Spleen (tissue), 13 donors: ENCODE measurements at regions of chr1 and their contacts with region 1.

Region 1: DNA sequence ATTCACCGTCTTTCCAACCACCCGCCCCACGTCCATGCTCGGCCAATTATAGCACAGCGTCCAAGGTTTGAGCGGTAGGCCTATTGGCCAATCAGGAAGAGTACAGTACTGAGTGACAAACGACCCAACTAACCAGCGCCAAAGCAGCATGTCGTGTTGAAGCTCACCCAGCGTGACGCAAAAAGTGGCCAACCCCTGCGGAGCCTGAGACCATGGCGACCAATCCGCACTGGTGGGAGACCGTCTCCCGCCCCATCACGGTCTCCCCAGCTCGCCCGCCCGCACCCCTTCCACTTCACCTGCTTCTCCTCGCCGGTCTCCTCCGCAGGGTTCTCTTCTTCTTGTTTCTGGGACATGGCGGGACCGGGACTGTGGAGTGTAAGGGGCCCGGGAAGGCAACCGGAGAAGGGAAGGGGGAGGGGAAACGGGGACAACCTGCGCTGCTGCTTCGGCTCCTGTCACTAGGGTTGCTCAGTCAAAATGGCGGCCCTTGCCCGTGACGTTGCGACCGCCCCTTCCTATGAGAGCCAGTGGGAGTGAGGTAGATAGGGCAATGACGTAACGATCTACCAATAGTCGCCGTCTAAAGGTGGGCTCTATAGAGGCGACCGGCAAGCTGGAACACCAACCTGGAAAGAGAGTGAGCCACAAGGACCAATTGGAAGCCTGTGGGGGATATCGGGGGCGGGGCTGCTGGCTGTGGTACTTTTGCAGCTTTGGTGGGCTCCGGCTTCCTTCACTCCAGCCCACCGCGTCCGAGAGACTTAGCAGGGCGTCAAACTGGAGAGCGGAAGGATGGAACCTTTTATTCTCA is at the start of gene ENSA:
- DNase-seq: peak; percentile 98
- H3K4me3 ChIP-seq: peak within 1 kb of the TSS; percentile 54 to 68 (median 60)
- H3K27ac ChIP-seq: peak within 1 kb of the TSS; percentile 87 to 99 (median 98)
- H3K4me1 ChIP-seq: peaks cover 16 to 49% (median 22%) of the 10 kb centered on the region in 6 donors
- H3K27me3 ChIP-seq: no peaks in the 10 kb centered on the region
- CTCF ChIP-seq: peak in 2 of 11 experiments; percentile 25 to 30
- POLR2A ChIP-seq: peak in 2 of 3 donors; percentile 71 to 88
- total RNA-seq, gene ENSA: 97.0 to 153 (median 135) TPM

Region 2: GRCh38 chr1:150696590-150697524 is 67.5 kb after region 1 on chr1 and contains the start of gene GOLPH3L:
- intact Hi-C with region 1: loop called (anchors 10 kb)
- DNase-seq: peak; percentile 93
- H3K4me3 ChIP-seq: peak within 1 kb of the TSS; percentile 73 to 89 (median 77)
- H3K27ac ChIP-seq: peak within 1 kb of the TSS in 6 of 8 donors; percentile 16 to 79 (median 72)
- H3K4me1 ChIP-seq: peaks cover 19 to 56% (median 38%) of the 10 kb centered on the region in 6 donors
- H3K27me3 ChIP-seq: no peaks in the 10 kb centered on the region
- CTCF ChIP-seq: peak in 3 of 11 experiments; percentile 36 to 51 (median 40)
- POLR2A ChIP-seq: peak in 1 of 3 donors; percentile 75
- total RNA-seq, gene GOLPH3L: 21.9 to 31.0 (median 27.1) TPM